ENCODE measurements at regions of chr3 and their contacts with region 1.

Region 1: DNA sequence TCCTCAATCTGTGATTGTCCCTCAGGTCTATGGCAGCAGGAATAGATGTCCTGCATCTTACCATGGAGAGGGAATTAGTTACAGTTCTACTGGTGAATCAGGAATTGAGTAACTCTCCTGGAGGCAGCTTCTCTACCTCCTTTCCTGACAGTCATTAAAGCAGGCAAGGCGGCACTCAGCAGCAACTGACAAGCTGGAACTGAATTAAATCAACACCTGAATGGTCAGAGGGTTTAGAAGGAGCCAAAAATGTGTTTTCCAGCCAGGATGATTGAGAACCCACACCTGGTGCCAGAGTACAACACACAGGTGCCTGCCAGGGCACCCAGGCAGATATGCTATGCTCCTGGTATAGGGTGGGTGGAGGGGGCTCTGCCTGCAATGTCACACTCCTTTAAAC is 43.1 kb upstream of the TIPARP start:
- DNase-seq: peak; percentile 64
- H3K4me3 ChIP-seq: no peak overlapping the region
- H3K27ac ChIP-seq: no peak overlapping the region
- H3K4me1 ChIP-seq: peaks cover 45% of the 10 kb centered on the region
- H3K27me3 ChIP-seq: no peaks in the 10 kb centered on the region
- CTCF ChIP-seq: no peak

Region 2: DNA sequence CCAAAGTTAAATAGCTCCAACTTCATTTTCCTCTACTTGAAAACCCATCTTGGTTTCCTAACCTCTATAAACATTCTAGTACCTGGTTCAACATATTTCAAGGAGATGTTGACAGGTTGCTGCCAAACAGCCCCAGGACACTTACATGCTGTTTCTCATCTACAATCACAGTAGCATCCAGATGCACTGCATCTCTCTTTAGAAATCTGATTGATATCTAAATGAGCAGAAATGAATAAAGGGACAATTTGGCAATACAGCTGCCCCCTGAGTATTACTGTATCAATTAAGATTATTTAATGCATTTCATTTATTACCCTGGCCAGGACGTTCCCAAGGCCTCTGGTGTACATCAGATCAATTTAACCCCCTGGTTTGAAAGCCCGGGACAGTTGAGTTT is 150.4 kb before region 1 on chr3:
- CTCF ChIA-PET with region 1: interaction called, 15 read pairs
- dilution Hi-C with region 1: no loop called
- in situ Hi-C with region 1: no loop called
- intact Hi-C with region 1: no loop called
- DNase-seq: no peak
- H3K4me3 ChIP-seq: no peak overlapping the region
- H3K27ac ChIP-seq: no peak overlapping the region
- H3K4me1 ChIP-seq: peaks cover 20% of the 10 kb centered on the region
- H3K27me3 ChIP-seq: no peaks in the 10 kb centered on the region
- CTCF ChIP-seq: no peak

Region 3: GRCh38 chr3:156751461-156752025 is 120.2 kb after region 1 on chr3:
- CTCF ChIA-PET with region 1: no interaction called
- dilution Hi-C with region 1: no loop called
- in situ Hi-C with region 1: no loop called
- intact Hi-C with region 1: no loop called
- DNase-seq: peak; percentile 87
- H3K4me3 ChIP-seq: peak overlapping the region in 1 of 3 experiments; percentile 2
- H3K27ac ChIP-seq: peak overlapping the region; percentile 94
- H3K4me1 ChIP-seq: peaks cover 27% of the 10 kb centered on the region
- H3K27me3 ChIP-seq: no peaks in the 10 kb centered on the region
- CTCF ChIP-seq: peak in 1 of 2 donors; percentile 29

Measured in mammary epithelial cell (primary cell).